ENCODE measurements at regions of chr2 and their contacts with region 1.

Region 1: DNA sequence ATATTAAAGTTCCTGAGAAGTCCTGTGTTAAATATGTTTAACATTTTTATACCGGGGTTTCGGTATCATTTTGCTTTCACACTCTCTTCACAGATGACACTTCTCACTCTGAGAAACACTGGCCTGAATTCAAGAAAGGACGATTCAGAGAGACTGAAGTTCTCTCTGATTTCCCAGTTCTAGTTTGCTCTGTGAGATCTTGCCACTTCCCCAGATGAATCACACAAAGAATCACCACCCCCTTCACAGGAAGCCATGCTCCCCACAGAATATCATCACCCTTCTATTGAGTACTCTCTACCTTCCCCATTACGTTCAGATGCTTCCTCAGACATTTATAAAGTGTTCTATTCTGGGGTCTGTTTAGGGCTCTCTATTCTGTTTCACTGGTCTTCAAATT is 16.1 kb upstream of the CD207 start:
- H3K4me3 ChIP-seq: no peak overlapping the region
- H3K27ac ChIP-seq: no peak overlapping the region
- H3K4me1 ChIP-seq: no peaks in the 10 kb centered on the region; the same call in 1 of the 2 replicates
- CTCF ChIP-seq: no peak

Region 2: DNA sequence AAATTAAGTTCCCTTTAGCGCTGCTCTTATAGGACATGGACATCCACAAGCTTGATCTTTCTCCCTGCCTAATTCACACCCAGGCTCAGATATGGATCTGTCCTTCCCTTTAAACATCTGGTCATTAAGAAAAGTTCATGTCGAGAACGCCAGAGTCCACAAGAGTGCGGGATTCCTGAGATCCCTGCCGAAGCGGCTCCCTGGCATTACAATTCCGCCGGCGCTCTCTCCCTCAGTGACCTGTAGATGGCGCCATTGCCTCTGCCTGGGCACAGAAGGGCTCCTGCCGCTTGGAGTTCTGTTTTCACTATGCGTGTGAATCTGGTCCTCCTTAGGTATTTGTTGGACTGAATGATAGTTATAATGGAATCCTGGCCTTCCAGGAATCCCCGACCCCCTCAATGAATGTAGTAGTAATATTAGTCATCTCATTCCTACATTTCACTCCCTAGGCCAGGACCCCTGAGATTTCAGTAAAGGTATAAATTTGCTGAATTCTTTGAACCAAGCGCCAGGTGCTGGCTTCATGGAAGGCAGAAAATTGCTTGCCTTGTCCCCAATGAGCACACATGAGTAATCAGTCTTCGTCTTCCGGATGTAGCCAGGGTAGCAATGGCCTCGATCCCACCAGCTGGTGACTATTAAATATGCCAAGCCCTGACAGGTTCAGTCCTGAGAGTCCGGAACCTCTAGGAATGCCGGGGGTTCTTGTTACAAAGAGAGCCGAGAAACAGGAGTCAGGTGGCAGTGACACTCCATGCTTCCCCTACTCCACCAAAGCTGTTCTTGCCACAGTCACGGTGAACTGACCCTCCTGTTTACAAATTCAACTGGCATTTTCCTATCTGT is 10.3 kb after region 1 on chr2:
- CTCF ChIA-PET with region 1: interaction called, 23 read pairs
- POLR2A ChIA-PET with region 1: no interaction called
- H3K4me3 ChIP-seq: no peak overlapping the region
- H3K27ac ChIP-seq: no peak overlapping the region
- H3K4me1 ChIP-seq: no peaks in the 10 kb centered on the region
- CTCF ChIP-seq: peak; percentile 94